Adrenal gland (tissue), 19 donors: ENCODE measurements at regions of chr4 and their contacts with region 1.

Region 1: GRCh38 chr4:112626228-112626627 is 10.5 kb downstream of the ZGRF1 start:
- DNase-seq: no peak
- H3K4me3 ChIP-seq: no peak overlapping the region
- H3K27ac ChIP-seq: no peak overlapping the region
- H3K4me1 ChIP-seq: no peaks in the 10 kb centered on the region
- H3K27me3 ChIP-seq: no peaks in the 10 kb centered on the region
- CTCF ChIP-seq: no peak
- POLR2A ChIP-seq: no peak

Region 2: DNA sequence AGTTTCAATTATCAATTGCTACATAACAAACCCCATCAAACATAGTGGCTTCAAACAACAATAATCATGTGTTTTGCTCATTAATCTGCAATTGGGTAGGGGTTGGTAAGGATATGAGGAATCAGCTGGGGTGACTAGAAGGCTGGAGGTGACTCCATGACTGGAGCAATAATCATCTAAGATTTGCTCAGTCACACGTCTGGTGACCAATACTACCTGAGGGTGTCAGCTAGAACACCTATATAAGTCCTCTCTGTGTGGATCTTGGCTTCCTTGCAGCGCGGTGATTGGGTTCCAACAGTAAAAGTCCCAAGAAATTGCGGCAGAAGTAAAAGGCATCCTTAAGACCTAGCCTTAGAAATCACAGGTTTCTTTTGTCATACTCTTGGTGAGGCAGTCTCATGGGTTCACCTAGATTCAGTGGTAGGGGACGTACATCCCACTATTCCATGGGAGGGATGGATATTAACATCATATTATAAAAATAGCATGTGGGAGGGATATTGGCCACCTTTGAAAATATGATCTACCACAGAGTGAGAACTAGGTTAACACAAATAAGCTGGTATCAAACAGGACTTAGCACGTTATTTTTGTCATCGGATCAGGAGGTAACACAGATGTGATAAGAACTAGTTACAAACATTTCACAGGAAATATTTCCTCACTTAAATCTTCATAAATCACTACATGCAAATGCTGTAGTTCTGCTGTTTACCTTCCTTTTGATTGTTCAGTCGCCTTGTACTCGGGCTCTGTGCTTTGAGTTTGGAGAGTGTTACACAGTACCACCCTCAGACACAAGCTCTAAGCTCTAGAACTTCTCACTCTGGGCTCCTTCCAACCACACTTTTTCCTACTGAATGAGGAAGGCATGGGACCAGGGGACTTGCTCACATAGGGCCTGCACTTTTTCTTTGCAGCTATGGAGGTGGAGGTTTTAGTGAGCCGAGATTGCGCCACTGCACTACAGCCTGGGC is 89.0 kb after region 1 on chr4:
- intact Hi-C with region 1: no loop called
- DNase-seq: no peak
- H3K4me3 ChIP-seq: no peak overlapping the region
- H3K27ac ChIP-seq: no peak overlapping the region
- H3K4me1 ChIP-seq: peaks cover 0 to 5% of the 10 kb centered on the region in 2 donors
- H3K27me3 ChIP-seq: no peaks in the 10 kb centered on the region
- CTCF ChIP-seq: no peak
- POLR2A ChIP-seq: no peak

Region 3: DNA sequence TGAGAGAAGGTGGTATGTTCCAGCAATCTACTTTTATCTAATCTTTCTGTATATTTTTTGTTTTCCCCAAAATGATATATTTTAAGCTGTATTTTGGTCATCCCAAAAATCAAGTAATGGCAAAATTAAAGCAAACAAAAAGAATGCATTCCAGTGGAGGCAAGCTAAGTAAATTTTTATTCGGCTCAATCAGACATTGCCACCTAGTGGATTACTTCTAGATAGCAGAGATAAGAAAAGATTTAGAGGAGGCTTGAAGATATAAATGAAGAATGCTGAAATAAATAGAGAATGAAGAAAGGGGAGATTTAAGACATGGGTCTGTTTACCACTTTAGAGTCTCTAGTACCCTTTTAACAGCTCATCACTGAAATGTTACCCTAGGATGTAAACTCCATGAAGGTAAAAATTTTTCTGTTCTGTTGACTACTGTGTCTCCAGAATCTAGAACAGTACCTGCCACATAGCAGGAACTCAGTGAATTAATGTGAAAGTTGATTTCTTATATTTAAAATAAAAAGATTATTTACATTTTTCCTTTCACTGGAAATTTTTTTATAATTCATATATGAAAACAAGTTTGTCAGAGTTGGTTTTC is 312.3 kb after region 1 on chr4:
- intact Hi-C with region 1: loop called in 1 of 2 experiments (anchors 10 kb)
- DNase-seq: no peak
- H3K4me3 ChIP-seq: no peak overlapping the region
- H3K27ac ChIP-seq: no peak overlapping the region
- H3K4me1 ChIP-seq: no peaks in the 10 kb centered on the region
- H3K27me3 ChIP-seq: no peaks in the 10 kb centered on the region
- CTCF ChIP-seq: peak; percentile 53 to 78 (median 69)
- POLR2A ChIP-seq: no peak